GM23248 (cell line): ENCODE measurements at regions of chr11 and their contacts with region 1.

Region 1: DNA sequence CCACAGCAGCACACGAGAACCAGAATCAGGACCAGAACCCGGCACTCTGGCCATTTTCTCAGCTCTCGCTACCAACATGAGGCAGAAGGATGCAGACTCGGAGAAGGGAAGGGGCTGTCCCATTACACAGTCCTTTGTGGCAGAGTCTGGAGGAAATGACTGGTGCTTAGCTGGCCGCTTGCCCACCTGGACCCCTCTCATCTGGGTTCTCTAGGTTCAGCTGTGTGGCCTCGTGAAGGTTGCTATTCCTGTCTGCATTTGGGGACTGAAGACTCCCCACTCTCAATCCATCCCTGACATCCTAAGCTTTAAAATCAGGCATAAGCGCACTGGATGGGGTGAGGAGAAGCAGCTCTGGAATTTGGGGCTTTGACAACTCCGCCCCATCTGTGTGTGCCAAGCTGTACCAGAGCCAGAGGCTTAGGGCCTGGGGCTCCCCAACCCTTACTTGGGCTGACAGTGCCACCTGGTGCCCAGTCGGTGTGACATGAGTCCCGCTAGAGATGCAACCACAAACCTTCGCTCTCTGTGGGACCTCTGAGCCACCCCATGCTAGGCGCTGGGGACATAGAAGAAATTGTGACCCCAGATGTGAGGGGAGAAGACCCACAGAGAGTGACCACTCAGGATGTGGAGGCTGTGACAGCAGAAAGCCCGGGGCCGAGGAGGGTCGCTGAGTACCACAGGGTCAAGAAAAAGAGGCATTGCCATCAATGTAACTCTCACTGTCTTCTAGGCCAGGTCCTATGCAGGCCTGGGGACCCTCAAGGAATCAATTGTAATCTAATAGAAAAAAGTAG is 35.9 kb upstream of the FCHSD2 start:
- DNase-seq: peak; percentile 90
- H3K4me3 ChIP-seq: no peak overlapping the region
- H3K27ac ChIP-seq: no peak overlapping the region
- H3K4me1 ChIP-seq: peaks cover 7% of the 10 kb centered on the region
- H3K27me3 ChIP-seq: no peaks in the 10 kb centered on the region

Region 2: DNA sequence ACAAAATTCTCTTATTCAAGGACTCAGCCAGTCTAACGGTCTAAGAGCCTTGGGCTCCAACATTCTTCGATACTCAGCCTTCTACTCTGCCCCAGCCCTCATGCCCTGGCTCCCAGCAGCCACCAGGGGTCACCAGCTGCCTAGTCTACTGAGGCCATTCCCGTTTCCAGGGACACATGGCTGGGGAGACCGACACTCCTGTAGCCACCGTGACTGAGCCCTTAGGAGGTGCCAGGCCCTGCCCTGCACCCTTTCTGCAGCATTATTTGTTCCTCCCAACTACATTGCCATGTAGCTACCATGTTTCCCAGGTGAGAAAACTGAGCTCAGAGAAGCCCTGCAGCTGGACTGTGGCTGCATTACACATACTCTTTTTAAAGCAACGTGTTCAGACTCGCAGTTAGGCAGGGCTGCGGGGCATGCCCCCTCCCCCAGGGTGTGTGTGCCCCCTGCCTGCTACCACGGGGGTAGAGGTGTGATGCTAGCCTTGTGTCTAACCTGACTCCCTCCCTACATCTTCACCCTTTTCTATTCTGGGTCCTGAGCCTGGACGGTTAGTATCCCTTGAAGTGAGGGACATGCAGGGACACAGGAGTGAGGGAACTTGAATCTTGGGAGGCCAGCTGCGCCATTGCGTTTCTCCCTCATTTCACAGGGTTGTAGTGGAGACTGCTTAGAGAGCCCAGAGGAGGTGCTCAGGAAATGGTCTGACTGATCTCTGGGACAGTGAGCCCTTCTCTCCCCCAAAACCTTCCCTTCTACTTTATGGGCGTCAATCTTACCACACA is 346.3 kb before region 1 on chr11:
- in situ Hi-C with region 1: loop called (anchors 10 kb)
- DNase-seq: peak; percentile 89
- H3K4me3 ChIP-seq: no peak overlapping the region
- H3K27ac ChIP-seq: no peak overlapping the region
- H3K4me1 ChIP-seq: no peaks in the 10 kb centered on the region
- H3K27me3 ChIP-seq: no peaks in the 10 kb centered on the region

Region 3: DNA sequence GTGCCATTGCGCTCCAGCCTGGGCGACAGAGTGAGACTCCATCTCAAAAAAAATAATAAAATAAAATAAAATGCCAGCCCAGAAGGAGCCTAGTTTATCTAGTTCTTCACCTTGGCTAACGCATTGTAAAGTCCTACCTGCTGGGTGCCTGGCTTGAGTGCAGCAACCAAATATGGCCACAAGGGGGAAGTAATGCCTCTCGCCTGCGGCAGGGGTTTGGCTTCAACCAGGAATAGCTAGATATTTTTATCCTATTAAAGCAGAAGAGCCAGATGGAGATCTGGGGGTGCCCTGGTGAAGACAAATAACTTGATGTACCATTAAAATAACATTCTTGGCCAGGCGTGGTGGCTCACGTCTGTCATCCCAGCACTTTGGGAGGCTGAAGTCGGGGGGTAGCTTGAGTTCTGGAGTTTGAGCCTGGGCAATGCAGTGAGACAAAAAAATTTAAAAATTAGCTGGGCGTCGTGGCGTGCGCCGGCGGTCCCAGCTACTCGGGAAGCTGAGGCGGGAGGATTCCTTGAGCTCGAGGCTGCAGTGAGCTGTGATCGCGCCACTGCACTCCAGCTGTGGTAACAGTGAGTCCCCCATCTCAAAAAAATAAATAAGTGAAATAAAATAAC is 447.8 kb after region 1 on chr11:
- in situ Hi-C with region 1: no loop called
- DNase-seq: peak; percentile 80
- H3K4me3 ChIP-seq: peak overlapping the region; percentile 70
- H3K27ac ChIP-seq: no peak overlapping the region
- H3K4me1 ChIP-seq: no peaks in the 10 kb centered on the region
- H3K27me3 ChIP-seq: peaks cover 12% of the 10 kb centered on the region; the same call in 1 of the 2 replicates